ENCODE measurements at regions of chr11 and their contacts with region 1.

Region 1: GRCh38 chr11:27717377-27717776 is 17.1 kb upstream of the BDNF start:
- DNase-seq: no peak
- ATAC-seq: no peak
- H3K4me3 Mint-ChIP-seq: no peak overlapping the region
- H3K27ac Mint-ChIP-seq: no peak overlapping the region
- H3K4me1 Mint-ChIP-seq: peaks cover 4% of the 10 kb centered on the region
- H3K27me3 Mint-ChIP-seq: peaks cover 47% of the 10 kb centered on the region

Region 2: GRCh38 chr11:27635567-27636037 is 81.8 kb before region 1 on chr11:
- CTCF ChIA-PET with region 1: no interaction called
- POLR2A ChIA-PET with region 1: no interaction called
- intact Hi-C with region 1: no loop called
- DNase-seq: no peak
- ATAC-seq: no peak
- H3K4me3 Mint-ChIP-seq: no peak overlapping the region
- H3K27ac Mint-ChIP-seq: no peak overlapping the region
- H3K4me1 Mint-ChIP-seq: no peaks in the 10 kb centered on the region
- H3K27me3 Mint-ChIP-seq: no peaks in the 10 kb centered on the region

Region 3: DNA sequence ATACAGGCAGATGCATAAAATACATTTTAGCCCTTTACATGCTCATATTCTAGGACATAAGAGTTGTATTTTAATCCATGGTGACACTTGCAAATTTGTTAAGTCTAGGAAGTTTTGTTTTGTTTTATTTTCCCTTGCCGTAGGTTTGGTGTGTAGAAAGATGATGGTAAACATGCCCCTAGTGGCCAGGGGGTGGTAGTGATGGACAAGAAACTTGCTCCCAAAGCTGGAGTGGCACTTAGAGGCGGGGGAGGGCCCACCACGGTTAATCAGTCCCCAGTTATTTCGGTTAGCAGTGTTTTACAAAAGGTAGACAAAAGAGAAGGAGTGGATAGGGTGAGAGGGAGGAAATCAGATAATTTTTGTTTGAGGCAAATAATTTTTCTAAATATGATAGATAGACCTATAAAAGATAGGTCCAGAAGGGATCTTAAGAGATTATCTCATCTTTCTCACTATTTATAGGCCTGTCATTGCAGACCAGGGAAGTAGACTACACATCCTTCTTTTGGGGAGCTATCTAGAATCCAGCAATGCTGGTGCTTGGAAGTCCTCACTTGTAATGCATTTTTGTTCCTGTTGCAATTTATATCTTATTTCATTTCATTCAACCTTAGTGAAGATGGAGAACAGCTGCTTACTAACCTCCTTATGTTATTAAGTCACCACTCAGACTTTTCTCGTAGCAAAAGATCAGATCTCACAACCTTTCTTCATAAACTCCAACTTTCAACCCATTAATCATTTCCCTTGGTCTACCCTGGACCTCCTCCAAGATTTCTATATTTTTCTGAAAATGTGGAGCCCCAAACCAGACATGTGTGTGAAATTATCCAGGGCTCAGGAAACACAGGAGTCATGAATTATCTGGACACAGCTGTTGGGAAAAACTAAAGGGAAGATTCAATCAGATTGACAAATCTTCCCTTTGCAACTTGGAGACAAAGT is 11.2 kb before region 1 on chr11:
- CTCF ChIA-PET with region 1: interaction called, 15 read pairs
- POLR2A ChIA-PET with region 1: no interaction called
- intact Hi-C with region 1: loop called in 1 of 2 experiments (anchors 1 kb)
- DNase-seq: peak; percentile 23
- ATAC-seq: no peak
- H3K4me3 Mint-ChIP-seq: no peak overlapping the region
- H3K27ac Mint-ChIP-seq: no peak overlapping the region
- H3K4me1 Mint-ChIP-seq: peaks cover 6% of the 10 kb centered on the region
- H3K27me3 Mint-ChIP-seq: peaks cover 34% of the 10 kb centered on the region